CD4-positive, alpha-beta memory T cell (primary cell): ENCODE measurements at regions of chr1 and their contacts with region 1.

Region 1: DNA sequence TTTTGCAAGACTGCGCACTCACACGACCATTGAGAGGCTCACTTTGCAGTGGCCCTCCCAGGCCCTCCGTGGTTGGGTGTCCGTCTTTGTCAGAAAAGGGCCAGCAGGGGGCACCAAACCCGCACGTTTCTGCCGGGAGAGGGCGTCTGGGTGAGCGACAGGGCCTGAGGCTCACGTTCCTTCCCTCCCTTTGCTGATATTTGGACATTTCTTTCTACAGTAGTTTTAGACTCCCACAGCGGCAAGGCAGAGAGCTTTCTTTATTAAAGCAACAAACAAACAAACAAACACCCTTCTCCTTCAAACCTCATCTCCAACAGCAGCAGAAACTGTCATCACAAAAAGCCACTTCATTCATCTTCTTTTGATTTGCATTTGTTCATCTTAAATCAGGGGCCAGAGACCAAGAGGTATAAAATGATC is 79.2 kb upstream of the WDR26 start:
- DNase-seq: peak; percentile 71 to 79 (median 73)
- H3K4me3 ChIP-seq: no peak overlapping the region
- H3K4me3 Mint-ChIP-seq: no peak overlapping the region
- H3K27ac ChIP-seq: no peak overlapping the region
- H3K27ac Mint-ChIP-seq: peak overlapping the region in 5 of 7 donors; percentile 10 to 44 (median 31)
- H3K4me1 ChIP-seq: no peaks in the 10 kb centered on the region
- H3K4me1 Mint-ChIP-seq: peaks cover 5 to 7% (median 7%) of the 10 kb centered on the region in 4 donors
- H3K27me3 ChIP-seq: no peaks in the 10 kb centered on the region
- H3K27me3 Mint-ChIP-seq: no peaks in the 10 kb centered on the region

Region 2: GRCh38 chr1:224503161-224504118 is 10.4 kb before region 1 on chr1:
- CTCF ChIA-PET with region 1: interaction called, 37 read pairs
- POLR2A ChIA-PET with region 1: interaction called, 3 read pairs
- intact Hi-C with region 1: no loop called
- DNase-seq: no peak
- H3K4me3 ChIP-seq: no peak overlapping the region
- H3K4me3 Mint-ChIP-seq: peak overlapping the region in 1 of 8 donors; percentile 53
- H3K27ac ChIP-seq: no peak overlapping the region
- H3K27ac Mint-ChIP-seq: peak overlapping the region in 2 of 7 donors; percentile 12 to 70
- H3K4me1 ChIP-seq: peaks cover 11% of the 10 kb centered on the region
- H3K4me1 Mint-ChIP-seq: peaks cover 9 to 26% (median 21%) of the 10 kb centered on the region in 4 donors
- H3K27me3 ChIP-seq: no peaks in the 10 kb centered on the region
- H3K27me3 Mint-ChIP-seq: peaks cover 0 to 1% of the 10 kb centered on the region in 2 donors

Region 3: DNA sequence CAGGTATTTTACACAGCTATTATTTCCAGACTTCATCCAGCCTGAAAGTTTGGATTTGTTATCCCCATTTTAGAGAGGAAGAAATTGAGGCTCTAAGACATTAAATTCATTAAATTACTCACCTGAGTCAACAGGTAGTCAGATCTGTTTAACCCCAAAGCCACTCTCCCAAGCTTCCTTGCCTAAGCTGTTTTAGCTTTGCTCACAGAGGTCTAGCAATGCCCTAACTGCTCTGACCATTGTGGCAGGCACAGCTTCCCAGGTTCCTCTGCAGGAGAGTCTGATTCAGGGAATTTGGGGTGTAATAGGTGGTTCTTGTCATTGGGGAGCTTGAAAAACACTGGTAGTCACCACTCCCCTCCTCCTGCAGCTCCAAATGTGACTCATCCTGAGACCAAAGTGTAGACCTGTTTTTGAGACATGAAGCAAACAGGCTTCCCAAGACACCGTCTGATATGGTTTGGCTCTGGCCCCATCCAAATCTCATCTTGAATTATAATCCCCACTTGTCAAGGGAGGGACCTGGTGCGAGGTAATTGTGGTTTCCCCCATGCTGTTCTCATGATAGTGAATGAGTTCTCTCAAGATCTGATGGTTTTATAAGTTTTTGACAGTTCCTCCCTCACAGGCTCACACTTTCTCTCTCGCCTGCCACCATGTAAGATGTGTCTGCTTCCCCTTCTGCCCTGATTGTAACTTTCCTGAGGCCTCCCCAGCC is 272.9 kb after region 1 on chr1:
- CTCF ChIA-PET with region 1: no interaction called
- POLR2A ChIA-PET with region 1: no interaction called
- intact Hi-C with region 1: no loop called
- DNase-seq: no peak
- H3K4me3 ChIP-seq: no peak overlapping the region
- H3K4me3 Mint-ChIP-seq: no peak overlapping the region
- H3K27ac ChIP-seq: no peak overlapping the region
- H3K27ac Mint-ChIP-seq: no peak overlapping the region
- H3K4me1 ChIP-seq: peaks cover 6% of the 10 kb centered on the region
- H3K4me1 Mint-ChIP-seq: peaks cover 12 to 14% (median 13%) of the 10 kb centered on the region in 4 donors
- H3K27me3 ChIP-seq: no peaks in the 10 kb centered on the region
- H3K27me3 Mint-ChIP-seq: peaks cover 8 to 9% of the 10 kb centered on the region in 2 donors

Region 4: GRCh38 chr1:224851210-224851847 is 337.5 kb after region 1 on chr1:
- CTCF ChIA-PET with region 1: interaction called, 199 read pairs
- POLR2A ChIA-PET with region 1: no interaction called
- intact Hi-C with region 1: loop called (anchors 1 kb)
- DNase-seq: peak in 4 of 5 donors; percentile 12 to 34 (median 28)
- H3K4me3 ChIP-seq: no peak overlapping the region
- H3K4me3 Mint-ChIP-seq: no peak overlapping the region
- H3K27ac ChIP-seq: no peak overlapping the region
- H3K27ac Mint-ChIP-seq: no peak overlapping the region
- H3K4me1 ChIP-seq: no peaks in the 10 kb centered on the region
- H3K4me1 Mint-ChIP-seq: peaks cover 0 to 1% (median 0%) of the 10 kb centered on the region in 4 donors
- H3K27me3 ChIP-seq: no peaks in the 10 kb centered on the region
- H3K27me3 Mint-ChIP-seq: peaks cover 0 to 3% of the 10 kb centered on the region in 2 donors

Region 5: DNA sequence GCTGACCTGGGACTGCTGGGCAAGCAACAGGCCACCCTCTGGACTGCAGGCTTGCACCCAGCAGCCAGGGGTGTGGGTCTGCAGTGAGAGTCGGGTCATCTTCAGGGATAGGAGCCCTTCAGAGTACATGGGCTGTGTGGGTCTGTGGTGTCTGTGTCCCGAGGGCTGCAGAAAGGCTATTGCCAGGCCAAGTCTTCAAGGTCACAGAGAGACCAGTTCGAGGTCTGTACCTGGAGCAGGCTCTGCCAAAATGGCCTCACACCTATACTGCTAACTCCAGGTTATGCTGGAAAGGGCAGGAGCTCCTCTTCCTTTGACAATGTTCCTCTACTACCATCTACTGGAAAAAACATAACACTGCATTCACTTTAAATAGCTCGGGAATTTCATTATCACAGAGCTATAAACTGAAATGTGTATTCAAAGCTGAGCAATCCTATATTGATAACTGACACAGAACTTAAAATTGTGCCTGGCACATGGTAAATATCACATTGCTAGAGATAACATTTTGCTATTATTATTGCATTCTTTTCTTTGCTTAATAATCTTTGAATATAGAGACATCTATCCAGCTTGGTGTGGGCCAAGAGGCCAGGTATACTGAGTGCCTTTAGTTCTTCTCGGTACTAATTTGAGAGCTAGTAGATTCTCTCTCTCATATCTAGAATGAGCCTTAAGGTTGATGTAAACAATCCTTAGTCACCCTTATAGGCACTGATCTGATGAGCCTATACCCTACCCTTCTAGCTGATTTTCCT is 408.8 kb after region 1 on chr1:
- CTCF ChIA-PET with region 1: interaction called, 115 read pairs
- POLR2A ChIA-PET with region 1: no interaction called
- intact Hi-C with region 1: no loop called
- DNase-seq: peak in 4 of 5 donors; percentile 3 to 21 (median 10)
- H3K4me3 ChIP-seq: no peak overlapping the region
- H3K4me3 Mint-ChIP-seq: no peak overlapping the region
- H3K27ac ChIP-seq: no peak overlapping the region
- H3K27ac Mint-ChIP-seq: no peak overlapping the region
- H3K4me1 ChIP-seq: no peaks in the 10 kb centered on the region
- H3K4me1 Mint-ChIP-seq: peaks cover 0 to 5% (median 2%) of the 10 kb centered on the region in 4 donors
- H3K27me3 ChIP-seq: no peaks in the 10 kb centered on the region
- H3K27me3 Mint-ChIP-seq: peaks cover 7 to 24% of the 10 kb centered on the region in 2 donors